Panc1 (cell line): ENCODE measurements at regions of chr5 and their contacts with region 1.

Region 1: DNA sequence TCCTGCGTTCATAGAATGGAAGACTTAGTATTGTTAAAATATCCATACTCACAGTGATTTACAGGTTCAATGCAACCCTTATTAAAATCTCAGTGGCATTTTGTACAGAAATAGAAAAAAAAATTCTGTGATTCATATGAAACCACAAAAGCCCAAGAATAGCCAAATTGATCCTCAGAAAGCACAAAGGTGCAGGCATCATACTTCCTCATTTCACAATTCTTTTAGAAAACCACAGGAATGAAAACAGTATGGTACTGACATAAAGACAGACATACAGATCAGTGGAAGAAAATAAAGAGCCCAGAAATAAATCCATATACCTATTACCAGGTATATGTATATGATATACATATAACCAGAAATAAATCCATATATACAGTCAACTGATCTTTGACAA is 86.8 kb upstream of the MEGF10 start:
- DNase-seq: no peak
- ATAC-seq: no peak
- H3K4me3 ChIP-seq: no peak overlapping the region
- H3K27ac ChIP-seq: no peak overlapping the region
- H3K4me1 ChIP-seq: no peaks in the 10 kb centered on the region
- H3K27me3 ChIP-seq: no peaks in the 10 kb centered on the region
- CTCF ChIP-seq: no peak

Region 2: GRCh38 chr5:127143722-127144121 is 60.1 kb before region 1 on chr5:
- CTCF ChIA-PET with region 1: interaction called, 11 read pairs
- POLR2A ChIA-PET with region 1: no interaction called
- in situ Hi-C with region 1: no loop called
- intact Hi-C with region 1: no loop called
- DNase-seq: no peak
- ATAC-seq: no peak
- H3K4me3 ChIP-seq: no peak overlapping the region
- H3K27ac ChIP-seq: no peak overlapping the region
- H3K4me1 ChIP-seq: no peaks in the 10 kb centered on the region
- H3K27me3 ChIP-seq: no peaks in the 10 kb centered on the region; the same call in 1 of the 2 replicates
- CTCF ChIP-seq: no peak

Region 3: GRCh38 chr5:127243011-127243410 is 39.2 kb after region 1 on chr5:
- CTCF ChIA-PET with region 1: no interaction called
- POLR2A ChIA-PET with region 1: no interaction called
- in situ Hi-C with region 1: no loop called
- intact Hi-C with region 1: no loop called
- DNase-seq: no peak
- ATAC-seq: no peak
- H3K4me3 ChIP-seq: no peak overlapping the region
- H3K27ac ChIP-seq: no peak overlapping the region
- H3K4me1 ChIP-seq: no peaks in the 10 kb centered on the region
- H3K27me3 ChIP-seq: no peaks in the 10 kb centered on the region
- CTCF ChIP-seq: no peak